IMR-90 (cell line): ENCODE measurements at regions of chr3 and their contacts with region 1.

Region 1: GRCh38 chr3:51941798-51942602 is at the starts of genes PARP3 and RRP9:
- DNase-seq: peak; percentile 100
- ATAC-seq: peak; percentile 93
- H3K4me3 ChIP-seq: peak within 1 kb of the TSS; percentile 49
- H3K27ac ChIP-seq: peak within 1 kb of the TSS; percentile 79
- H3K4me1 ChIP-seq: peaks cover 13% of the 10 kb centered on the region
- H3K27me3 ChIP-seq: no peaks in the 10 kb centered on the region
- CTCF ChIP-seq: peak; percentile 99
- POLR2A ChIP-seq: peak; percentile 51
- RAD21 ChIP-seq: peak; percentile 97
- total RNA-seq, gene PARP3: 14.4 and 16.3 TPM in 2 replicates
- total RNA-seq, gene RRP9: 38.6 and 39.8 TPM in 2 replicates

Region 2: GRCh38 chr3:51391075-51391567 is 550.9 kb before region 1 on chr3 and contains the start of gene RBM15B:
- CTCF ChIA-PET with region 1: no interaction called
- POLR2A ChIA-PET with region 1: no interaction called
- dilution Hi-C with region 1: no loop called
- in situ Hi-C with region 1: loop called (anchors 25 kb)
- intact Hi-C with region 1: no loop called
- DNase-seq: peak; percentile 96
- ATAC-seq: peak; percentile 93
- H3K4me3 ChIP-seq: peak within 1 kb of the TSS; percentile 70
- H3K27ac ChIP-seq: peak within 1 kb of the TSS; percentile 85
- H3K4me1 ChIP-seq: peaks cover 34% of the 10 kb centered on the region
- H3K27me3 ChIP-seq: no peaks in the 10 kb centered on the region
- CTCF ChIP-seq: peak; percentile 95
- POLR2A ChIP-seq: peak; percentile 96
- RAD21 ChIP-seq: peak; percentile 37; the same call in 1 of the 2 replicates
- total RNA-seq, gene RBM15B: 17.2 and 17.4 TPM in 2 replicates

Region 3: GRCh38 chr3:51982782-51983577 is 41.0 kb after region 1 on chr3 and contains the start of gene ACY1:
- CTCF ChIA-PET with region 1: no interaction called
- POLR2A ChIA-PET with region 1: no interaction called
- dilution Hi-C with region 1: no loop called
- in situ Hi-C with region 1: no loop called
- intact Hi-C with region 1: loop called (anchors 2 kb)
- DNase-seq: peak; percentile 81
- ATAC-seq: peak; percentile 88
- H3K4me3 ChIP-seq: peak within 1 kb of the TSS; percentile 63
- H3K27ac ChIP-seq: peak within 1 kb of the TSS; percentile 90
- H3K4me1 ChIP-seq: peaks cover 11% of the 10 kb centered on the region
- H3K27me3 ChIP-seq: no peaks in the 10 kb centered on the region
- CTCF ChIP-seq: no peak
- POLR2A ChIP-seq: peak; percentile 74
- RAD21 ChIP-seq: no peak
- total RNA-seq, gene ACY1: 21.1 and 22.0 TPM in 2 replicates

Region 4: DNA sequence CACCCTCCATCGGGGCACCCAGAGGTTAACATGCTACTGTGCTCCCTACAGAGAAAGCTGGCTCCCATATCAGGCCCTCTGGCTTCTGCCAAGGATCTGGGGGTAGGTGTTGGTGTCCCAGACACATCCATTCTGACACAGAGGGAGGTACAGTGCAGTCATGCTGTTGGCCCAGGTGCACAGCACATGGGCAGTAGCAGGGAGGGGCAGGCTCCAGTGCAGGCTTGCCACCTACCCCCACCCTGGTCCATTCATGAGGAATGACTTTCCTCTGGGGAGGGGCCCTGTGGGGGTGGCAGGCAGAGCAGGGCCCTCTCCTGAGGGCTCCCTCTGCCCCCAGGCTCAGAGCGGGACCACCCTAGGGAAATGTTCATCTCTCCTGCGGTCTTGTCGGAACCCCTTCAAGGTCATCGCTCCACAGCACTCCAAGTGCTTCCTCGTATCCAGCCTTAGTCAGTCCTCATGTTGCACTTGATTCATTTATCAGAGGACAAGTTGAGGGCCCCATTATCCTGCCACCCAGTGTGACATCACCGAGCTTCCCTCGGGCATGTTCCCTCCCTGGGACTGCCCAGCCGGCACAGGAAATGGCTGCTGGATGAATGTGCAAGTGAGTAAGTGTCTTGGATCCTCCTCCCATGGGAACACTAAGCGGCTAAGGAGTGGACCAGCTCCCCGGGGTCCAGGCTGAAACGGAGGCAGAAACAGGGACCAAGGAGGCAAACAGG is 104.3 kb after region 1 on chr3:
- CTCF ChIA-PET with region 1: no interaction called
- POLR2A ChIA-PET with region 1: no interaction called
- dilution Hi-C with region 1: no loop called
- in situ Hi-C with region 1: no loop called
- intact Hi-C with region 1: loop called (anchors 2 kb)
- DNase-seq: peak; percentile 98
- ATAC-seq: peak; percentile 91
- H3K4me3 ChIP-seq: no peak overlapping the region
- H3K27ac ChIP-seq: peak overlapping the region; percentile 89
- H3K4me1 ChIP-seq: peaks cover 36% of the 10 kb centered on the region
- H3K27me3 ChIP-seq: no peaks in the 10 kb centered on the region
- CTCF ChIP-seq: no peak
- POLR2A ChIP-seq: no peak
- RAD21 ChIP-seq: no peak; the same call in 1 of the 2 replicates

Region 5: GRCh38 chr3:52123106-52123725 is 181.2 kb after region 1 on chr3:
- CTCF ChIA-PET with region 1: interaction called, 3 read pairs
- POLR2A ChIA-PET with region 1: no interaction called
- dilution Hi-C with region 1: no loop called
- in situ Hi-C with region 1: no loop called
- intact Hi-C with region 1: loop called (anchors 1 kb)
- DNase-seq: peak; percentile 65
- ATAC-seq: peak; percentile 97
- H3K4me3 ChIP-seq: no peak overlapping the region
- H3K27ac ChIP-seq: no peak overlapping the region
- H3K4me1 ChIP-seq: peaks cover 2% of the 10 kb centered on the region
- H3K27me3 ChIP-seq: no peaks in the 10 kb centered on the region
- CTCF ChIP-seq: peak; percentile 94
- POLR2A ChIP-seq: 0 out of 2 replicates have a peak, but pooled peaks have one; percentile 40
- RAD21 ChIP-seq: peak; percentile 98

Region 6: GRCh38 chr3:52197842-52198668 is 256.1 kb after region 1 on chr3 and contains the start of gene ALAS1:
- CTCF ChIA-PET with region 1: no interaction called
- POLR2A ChIA-PET with region 1: no interaction called
- dilution Hi-C with region 1: no loop called
- in situ Hi-C with region 1: no loop called
- intact Hi-C with region 1: loop called (anchors 2 kb)
- DNase-seq: peak; percentile 82
- ATAC-seq: peak; percentile 84
- H3K4me3 ChIP-seq: peak within 1 kb of the TSS; percentile 85
- H3K27ac ChIP-seq: peak within 1 kb of the TSS; percentile 81
- H3K4me1 ChIP-seq: peaks cover 36% of the 10 kb centered on the region
- H3K27me3 ChIP-seq: no peaks in the 10 kb centered on the region
- CTCF ChIP-seq: no peak
- POLR2A ChIP-seq: peak; percentile 91
- RAD21 ChIP-seq: no peak
- total RNA-seq, gene ALAS1: 29.7 and 32.8 TPM in 2 replicates